ENCODE measurements at regions of chr12 and their contacts with region 1.

Region 1: DNA sequence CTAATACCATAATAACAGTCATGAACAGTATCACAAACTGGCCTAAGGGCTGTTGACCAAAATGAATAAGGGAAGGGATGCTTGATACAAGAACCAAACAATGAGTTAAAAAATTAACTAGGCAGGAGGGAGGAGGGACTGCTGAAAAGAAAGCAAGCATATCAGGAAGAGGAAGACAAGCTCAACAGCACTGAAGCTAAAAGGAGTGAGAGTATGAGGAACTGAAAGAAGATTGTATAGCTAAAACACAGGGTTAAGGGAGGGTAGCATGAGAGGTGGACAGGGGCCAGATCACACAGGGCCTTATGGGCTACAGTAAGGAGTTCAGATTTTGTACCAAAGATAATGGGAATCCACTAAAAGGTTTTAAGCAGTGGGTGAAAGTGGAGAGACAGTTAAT is 34.1 kb downstream of the ITGA7 start:
- DNase-seq: no peak
- ATAC-seq: peak; percentile 33

Region 2: GRCh38 chr12:53917126-53917653 is 1756.4 kb before region 1 on chr12:
- intact Hi-C with region 1: no loop called
- DNase-seq: no peak
- ATAC-seq: no peak

Region 3: DNA sequence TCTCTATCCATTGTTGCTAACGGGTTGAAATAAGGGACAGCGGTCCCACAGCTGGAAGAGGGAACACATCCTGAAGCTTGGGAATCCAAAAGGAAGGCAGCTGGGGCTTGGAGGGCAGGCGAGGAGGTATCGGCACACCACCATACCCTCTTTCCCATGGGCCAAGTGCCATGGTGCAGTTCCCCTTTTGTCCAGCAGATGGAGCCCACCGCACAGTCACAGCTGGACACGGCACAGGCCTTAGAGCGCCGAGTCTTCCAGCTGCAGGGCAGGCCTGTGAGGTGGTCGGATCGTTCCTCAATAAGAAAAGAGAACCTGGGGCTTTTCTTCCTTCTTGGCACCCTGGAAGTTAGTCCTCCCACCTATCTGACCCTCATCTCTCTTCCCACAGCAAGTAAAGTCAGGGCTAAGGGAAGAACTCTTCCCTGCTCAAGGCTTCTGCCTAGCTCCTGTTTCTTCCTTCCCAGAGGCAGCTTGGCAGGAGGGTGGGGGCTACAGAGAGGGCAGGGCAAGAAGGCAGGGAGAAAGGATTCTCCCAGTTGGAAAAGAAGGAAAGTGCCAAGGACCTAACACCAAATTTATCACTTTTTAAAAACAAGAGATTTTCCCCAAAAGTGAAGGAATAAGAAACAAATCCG is 1093.8 kb before region 1 on chr12:
- intact Hi-C with region 1: loop called (anchors 5 kb)
- DNase-seq: peak; percentile 93
- ATAC-seq: peak; percentile 96

Region 4: GRCh38 chr12:55641595-55641994 is 32.0 kb before region 1 on chr12:
- intact Hi-C with region 1: loop called (anchors 1 kb)
- DNase-seq: no peak
- ATAC-seq: no peak

Region 5: DNA sequence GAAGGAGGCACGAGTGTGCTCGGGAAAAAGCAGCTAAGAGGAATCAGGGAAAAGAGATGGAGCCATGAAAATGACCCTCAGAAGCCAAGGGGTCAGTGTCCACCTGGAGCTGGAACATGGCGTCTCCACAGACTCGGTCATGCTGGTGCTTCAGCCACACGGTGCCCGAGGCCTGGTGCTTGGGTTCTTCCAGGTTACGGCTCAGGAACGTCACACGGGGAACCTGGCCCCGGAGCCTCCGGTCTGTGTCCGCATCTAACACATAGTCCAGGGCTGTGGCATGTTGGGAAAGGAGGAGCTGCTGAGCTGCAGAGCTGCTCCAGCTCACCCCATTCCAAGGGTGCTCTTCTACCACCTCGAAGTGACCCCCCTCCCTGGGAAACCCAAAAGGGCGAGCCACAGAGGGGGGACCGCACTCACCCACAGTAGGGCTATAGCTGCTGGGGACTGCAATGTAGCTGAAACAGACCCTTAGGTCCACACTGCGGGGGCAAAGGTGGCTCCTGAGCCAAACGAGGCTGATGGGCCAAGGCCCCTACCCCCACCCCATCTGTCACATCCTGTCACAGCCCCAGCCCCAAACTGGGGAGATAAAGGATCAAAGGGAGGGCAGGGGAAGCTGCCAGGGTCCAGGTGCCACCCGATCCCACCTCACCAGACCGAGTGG is 23.3 kb after region 1 on chr12:
- intact Hi-C with region 1: no loop called
- DNase-seq: peak; percentile 49
- ATAC-seq: no peak

Region 6: GRCh38 chr12:55728939-55729823 is 55.5 kb after region 1 on chr12 and contains the start of gene CD63:
- intact Hi-C with region 1: loop called (anchors 10 kb)
- DNase-seq: peak; percentile 96
- ATAC-seq: peak; percentile 90
- total RNA-seq, gene CD63: 870 TPM